ENCODE measurements at regions of chr7 and their contacts with region 1.

Region 1: GRCh38 chr7:141975806-141976523 is 2.4 kb upstream of the TAS2R38 start:
- DNase-seq: peak; percentile 57 to 90 (median 80)

Region 2: DNA sequence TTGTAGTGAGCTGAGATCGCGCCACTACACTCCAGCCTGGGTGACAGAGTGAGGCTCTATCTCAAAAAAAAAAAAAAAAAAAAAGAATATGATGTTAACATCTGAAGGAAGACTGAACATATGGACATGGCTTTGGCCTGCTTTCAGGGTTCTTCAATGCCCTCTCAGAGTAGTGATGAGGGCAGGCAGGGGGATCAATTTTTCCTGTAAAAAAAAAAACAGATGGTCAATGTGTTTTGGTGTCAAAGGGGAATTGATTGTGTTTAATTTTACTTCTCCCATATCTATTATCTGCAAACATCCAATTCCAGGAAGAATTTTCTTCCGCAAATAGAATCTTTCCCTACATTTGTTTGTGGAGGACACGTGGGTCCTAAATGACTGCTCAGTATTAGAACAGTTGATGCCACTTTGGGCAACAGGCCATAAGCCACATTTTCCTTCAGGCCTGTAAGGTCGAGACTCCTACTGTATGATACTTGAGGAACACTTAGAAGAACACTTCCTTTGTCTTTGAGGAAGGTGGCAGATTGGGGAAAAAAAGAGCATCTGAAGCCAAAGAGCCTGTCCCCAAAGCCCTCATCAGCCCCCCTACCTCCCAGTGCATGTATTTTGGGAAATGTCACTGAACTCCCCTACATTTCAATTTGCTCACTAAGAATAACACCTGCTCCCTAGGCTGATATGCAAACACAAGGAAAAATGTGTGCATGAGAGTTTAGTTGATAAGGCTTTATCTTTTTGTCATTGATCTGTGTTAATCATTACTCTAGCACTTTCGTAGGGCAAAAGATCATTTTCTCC is 163.8 kb after region 1 on chr7:
- intact Hi-C with region 1: no loop called
- DNase-seq: no peak

Region 3: DNA sequence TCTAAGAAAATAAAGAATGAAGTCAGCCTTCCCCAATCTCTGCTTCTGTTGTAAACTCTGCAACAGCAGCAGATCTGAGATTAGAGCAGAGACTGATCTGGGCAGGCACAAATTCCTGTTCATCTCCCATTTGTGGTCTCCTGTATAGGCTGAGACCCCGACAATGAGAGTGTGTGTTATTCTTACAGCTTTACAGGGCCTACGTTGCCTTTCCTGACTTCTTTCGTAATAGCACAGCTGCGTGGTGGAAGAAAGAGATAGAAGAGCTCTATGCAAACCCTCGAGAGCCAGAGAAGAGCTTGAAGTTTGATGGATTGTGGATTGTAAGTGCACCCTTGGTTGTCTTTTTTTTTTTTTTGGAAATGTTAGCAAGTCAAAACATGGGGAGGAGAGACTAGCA is 209.8 kb after region 1 on chr7:
- intact Hi-C with region 1: loop called (anchors 2 kb)
- DNase-seq: no peak